ENCODE measurements at regions of chr5 and their contacts with region 1.

Region 1: GRCh38 chr5:174951146-174951780 is 226.9 kb downstream of the MSX2 start:
- DNase-seq: no peak
- H3K4me3 ChIP-seq: no peak overlapping the region
- H3K27ac ChIP-seq: no peak overlapping the region
- H3K4me1 ChIP-seq: no peaks in the 10 kb centered on the region
- H3K27me3 ChIP-seq: peaks cover 61% of the 10 kb centered on the region
- CTCF ChIP-seq: peak; percentile 87

Region 2: GRCh38 chr5:175444060-175444904 is 493.0 kb after region 1 on chr5 and contains the start of gene DRD1:
- intact Hi-C with region 1: loop called (anchors 5 kb)
- DNase-seq: no peak
- H3K4me3 ChIP-seq: peak within 1 kb of the TSS; percentile 42
- H3K27ac ChIP-seq: no peak within 1 kb of the TSS
- H3K4me1 ChIP-seq: peaks cover 15% of the 10 kb centered on the region
- H3K27me3 ChIP-seq: peaks cover 100% of the 10 kb centered on the region
- CTCF ChIP-seq: peak; percentile 77
- total RNA-seq, gene DRD1: not detected

Measured in left ventricle myocardium inferior (tissue), 1 donor.